ENCODE measurements at regions of chr2 and their contacts with region 1.

Region 1: GRCh38 chr2:55419679-55420438 is at the start of gene CCDC88A:
- DNase-seq: peak; percentile 98
- H3K4me3 ChIP-seq: peak within 1 kb of the TSS; percentile 67 to 94 (median 88)
- H3K27ac ChIP-seq: peak within 1 kb of the TSS; percentile 86 to 93 (median 92)
- H3K4me1 ChIP-seq: peaks cover 5 to 34% (median 23%) of the 10 kb centered on the region in 4 donors
- H3K27me3 ChIP-seq: no peaks in the 10 kb centered on the region
- CTCF ChIP-seq: peak in 2 of 3 experiments; percentile 20 to 52
- EP300 ChIP-seq: no peak
- POLR2A ChIP-seq: peak; percentile 61
- total RNA-seq, gene CCDC88A: 29.7 to 58.6 (median 38.5) TPM

Region 2: DNA sequence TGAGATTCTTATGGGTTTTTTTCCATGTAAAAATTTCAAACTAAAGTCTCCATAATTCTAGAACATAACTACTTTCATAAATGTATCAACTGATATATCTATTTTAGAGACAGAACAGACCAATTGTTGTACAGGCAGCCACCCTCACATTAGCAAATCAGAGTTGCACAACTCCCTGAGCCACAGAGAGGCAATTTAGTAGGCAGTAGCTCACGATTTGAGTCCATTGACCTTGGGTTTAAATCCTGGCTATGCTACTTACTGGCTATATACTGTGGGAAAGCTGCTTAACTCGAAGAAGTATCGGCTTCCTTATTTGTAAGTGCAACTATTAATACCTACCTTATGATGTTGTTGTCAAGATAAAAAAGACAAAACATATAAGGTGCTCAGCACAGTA is 167.0 kb before region 1 on chr2:
- intact Hi-C with region 1: no loop called
- DNase-seq: no peak
- H3K4me3 ChIP-seq: no peak overlapping the region
- H3K27ac ChIP-seq: no peak overlapping the region
- H3K4me1 ChIP-seq: no peaks in the 10 kb centered on the region
- H3K27me3 ChIP-seq: no peaks in the 10 kb centered on the region
- CTCF ChIP-seq: no peak
- EP300 ChIP-seq: no peak
- POLR2A ChIP-seq: no peak

Region 3: DNA sequence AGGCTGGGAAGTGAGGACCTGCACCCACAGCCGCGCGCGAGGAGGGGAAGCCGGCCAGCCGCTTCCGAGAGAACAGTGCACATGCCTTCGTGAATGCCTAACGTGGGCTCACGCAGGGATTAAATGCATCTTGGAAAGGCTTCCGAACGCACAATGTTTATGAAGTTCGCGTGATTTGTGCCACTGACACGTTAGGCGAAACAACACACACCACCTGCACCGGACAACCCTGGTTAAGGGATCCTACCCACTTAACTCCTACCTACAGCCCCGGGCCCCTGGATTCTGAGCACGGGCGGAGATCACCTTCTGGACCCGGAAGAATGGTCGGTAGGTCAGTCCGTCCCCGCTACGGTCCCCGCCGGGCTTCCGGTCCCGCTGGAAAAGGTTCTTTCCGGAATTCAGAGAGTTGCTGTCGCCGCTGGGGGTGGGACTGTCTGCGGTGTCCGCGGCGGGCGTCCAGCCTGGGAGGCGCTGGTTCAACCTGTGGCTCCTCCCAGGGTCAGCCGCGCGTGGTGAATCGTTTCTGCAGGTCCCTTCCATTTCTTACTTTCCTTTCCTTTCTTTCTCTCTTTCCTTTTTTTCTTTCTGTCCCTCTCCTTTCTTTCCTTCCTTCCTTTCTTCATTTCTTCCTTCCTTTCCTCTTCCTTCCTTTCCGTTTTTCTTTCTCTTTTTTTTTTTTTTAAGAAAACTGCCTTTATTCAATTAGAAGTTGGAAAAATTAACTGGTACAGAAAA is 150.8 kb before region 1 on chr2 and contains the start of gene MTIF2:
- intact Hi-C with region 1: loop called (anchors 5 kb)
- DNase-seq: peak; percentile 97
- H3K4me3 ChIP-seq: peak within 1 kb of the TSS; percentile 71 to 83 (median 72)
- H3K27ac ChIP-seq: peak within 1 kb of the TSS; percentile 83 to 90 (median 88)
- H3K4me1 ChIP-seq: peaks cover 13 to 20% (median 18%) of the 10 kb centered on the region in 4 donors
- H3K27me3 ChIP-seq: no peaks in the 10 kb centered on the region
- CTCF ChIP-seq: peak in 2 of 3 experiments; percentile 2 to 26
- EP300 ChIP-seq: no peak
- POLR2A ChIP-seq: no peak
- total RNA-seq, gene MTIF2: 16.1 to 22.6 (median 21.0) TPM

Region 4: GRCh38 chr2:55282110-55282917 is 137.5 kb before region 1 on chr2:
- intact Hi-C with region 1: loop called (anchors 5 kb)
- DNase-seq: peak; percentile 93
- H3K4me3 ChIP-seq: peak overlapping the region; percentile 66 to 87 (median 71)
- H3K27ac ChIP-seq: peak overlapping the region; percentile 87 to 94 (median 88)
- H3K4me1 ChIP-seq: peaks cover 16 to 34% (median 27%) of the 10 kb centered on the region in 4 donors
- H3K27me3 ChIP-seq: peaks cover 0 to 11% (median 0%) of the 10 kb centered on the region in 4 donors
- CTCF ChIP-seq: no peak
- EP300 ChIP-seq: no peak
- POLR2A ChIP-seq: no peak

Region 5: DNA sequence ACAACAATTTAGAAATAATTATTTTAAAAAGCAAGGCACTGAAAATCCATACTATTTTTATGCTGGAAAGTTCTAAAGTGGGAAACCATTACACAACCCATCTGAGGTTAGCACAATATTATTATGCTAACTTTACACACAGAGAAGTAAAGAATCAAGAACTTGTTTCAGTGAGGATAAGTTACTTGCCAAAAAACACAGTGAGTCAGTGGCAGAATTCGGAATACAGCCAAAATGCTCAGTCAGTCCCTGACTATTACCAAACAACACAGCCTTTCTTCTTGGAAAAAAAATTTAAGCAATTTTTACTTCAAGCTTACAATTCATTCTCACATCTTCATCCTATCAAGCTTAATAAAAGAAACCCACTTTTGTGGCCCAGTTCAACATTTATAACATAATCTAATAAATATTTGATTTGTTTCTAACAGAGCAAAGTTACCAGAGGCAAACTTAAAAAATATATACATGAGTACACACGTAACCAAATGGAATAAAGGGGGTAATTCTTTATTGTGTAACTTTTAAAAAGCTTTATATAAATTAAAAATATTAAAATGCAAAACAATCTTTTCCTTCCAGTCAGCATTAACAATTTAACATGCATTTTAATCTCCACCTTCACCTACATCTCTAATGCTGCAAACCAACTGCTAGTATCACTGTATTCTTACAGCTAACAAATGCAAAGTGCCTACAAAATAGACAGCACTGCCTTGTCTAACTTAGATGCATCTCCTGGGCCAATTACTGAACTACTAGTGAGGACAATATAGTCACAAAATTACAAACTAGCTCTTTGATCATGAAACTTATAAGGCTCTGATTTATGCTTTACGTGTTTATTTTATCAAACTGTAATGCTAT is 55.4 kb before region 1 on chr2:
- intact Hi-C with region 1: loop called (anchors 2 kb)
- DNase-seq: no peak
- H3K4me3 ChIP-seq: no peak overlapping the region
- H3K27ac ChIP-seq: peak overlapping the region; percentile 32 to 49 (median 42)
- H3K4me1 ChIP-seq: peaks cover 0 to 43% (median 30%) of the 10 kb centered on the region in 4 donors
- H3K27me3 ChIP-seq: no peaks in the 10 kb centered on the region
- CTCF ChIP-seq: no peak
- EP300 ChIP-seq: no peak
- POLR2A ChIP-seq: no peak

Region 6: GRCh38 chr2:55519938-55520885 is 100.4 kb after region 1 on chr2:
- intact Hi-C with region 1: loop called (anchors 5 kb)
- DNase-seq: peak; percentile 92
- H3K4me3 ChIP-seq: peak overlapping the region; percentile 79 to 91 (median 85)
- H3K27ac ChIP-seq: peak overlapping the region; percentile 83 to 92 (median 88)
- H3K4me1 ChIP-seq: peaks cover 6 to 23% (median 16%) of the 10 kb centered on the region in 4 donors
- H3K27me3 ChIP-seq: no peaks in the 10 kb centered on the region
- CTCF ChIP-seq: no peak
- EP300 ChIP-seq: no peak
- POLR2A ChIP-seq: no peak

Region 7: DNA sequence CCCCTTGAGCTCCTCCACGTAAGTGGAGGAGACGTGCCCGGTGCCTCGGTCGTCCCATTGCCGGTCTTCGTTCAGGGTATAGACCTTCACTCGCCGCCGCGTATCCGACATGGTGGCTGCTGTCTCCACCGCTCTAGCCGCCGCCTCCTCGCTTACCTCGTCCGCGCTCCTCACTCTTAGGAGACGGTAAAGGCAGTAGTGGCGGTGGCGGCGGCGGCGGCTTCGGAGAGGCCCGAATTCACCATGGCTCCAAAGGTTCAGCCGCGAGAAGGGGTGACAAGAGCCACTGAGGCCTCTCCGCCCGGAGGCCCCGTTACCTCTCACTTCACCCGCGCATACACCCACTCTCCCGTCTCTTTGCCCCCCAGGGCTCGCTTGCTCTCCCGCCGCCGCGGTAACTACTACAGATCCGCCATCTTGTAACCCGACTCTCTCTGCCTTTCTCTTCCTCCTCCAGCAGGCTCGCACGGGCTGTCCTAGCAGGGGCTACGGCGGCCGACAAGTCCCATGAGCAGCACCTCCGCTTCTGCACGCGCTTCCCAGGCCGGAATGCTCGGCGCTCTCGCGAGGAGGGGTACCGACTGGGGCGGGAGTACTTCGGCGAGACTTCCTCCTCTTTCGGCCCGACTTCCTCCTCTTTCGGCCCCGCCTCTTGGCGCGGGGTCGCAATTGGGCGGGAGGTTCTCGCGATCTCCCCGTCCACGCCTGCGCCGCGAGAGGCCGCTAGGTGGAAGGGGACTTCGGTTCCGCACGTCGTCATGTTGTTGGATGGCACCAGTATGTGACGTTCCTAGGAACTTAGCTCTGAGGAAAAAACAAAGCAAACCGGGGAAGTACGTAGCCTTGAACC is 197.5 kb after region 1 on chr2 and contains the start of gene PPP4R3B:
- intact Hi-C with region 1: loop called (anchors 10 kb)
- DNase-seq: peak; percentile 99
- H3K4me3 ChIP-seq: peak within 1 kb of the TSS; percentile 81 to 99 (median 84)
- H3K27ac ChIP-seq: peak within 1 kb of the TSS; percentile 90 to 98 (median 95)
- H3K4me1 ChIP-seq: peaks cover 26 to 58% (median 50%) of the 10 kb centered on the region in 4 donors
- H3K27me3 ChIP-seq: no peaks in the 10 kb centered on the region
- CTCF ChIP-seq: peak; percentile 32 to 66 (median 54)
- EP300 ChIP-seq: no peak
- POLR2A ChIP-seq: peak; percentile 78
- total RNA-seq, gene PPP4R3B: 81.8 to 106 (median 90.5) TPM

Region 8: DNA sequence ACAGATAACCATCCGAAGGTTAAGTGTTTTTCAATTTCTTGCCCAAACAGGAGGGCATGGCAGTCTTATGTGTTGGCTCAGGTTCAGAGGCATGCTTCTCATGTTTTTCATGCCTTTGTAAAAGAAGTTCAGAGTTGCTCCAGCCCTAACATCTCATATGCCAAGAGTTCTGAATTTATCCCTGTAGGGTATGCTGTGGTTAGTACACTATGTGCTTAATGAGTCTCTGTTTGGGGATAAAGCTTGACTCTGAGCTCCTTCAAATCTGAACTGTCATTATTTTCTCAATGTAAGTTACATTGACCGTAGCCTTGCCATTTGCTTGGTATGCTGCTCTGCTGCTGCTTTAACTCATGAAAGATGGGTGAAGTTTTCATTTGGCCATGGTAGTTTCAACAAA is 341.7 kb after region 1 on chr2:
- intact Hi-C with region 1: no loop called
- DNase-seq: no peak
- H3K4me3 ChIP-seq: no peak overlapping the region
- H3K27ac ChIP-seq: peak overlapping the region in 1 of 4 donors; percentile 11
- H3K4me1 ChIP-seq: peaks cover 0 to 10% (median 0%) of the 10 kb centered on the region in 4 donors
- H3K27me3 ChIP-seq: no peaks in the 10 kb centered on the region
- CTCF ChIP-seq: no peak
- EP300 ChIP-seq: no peak
- POLR2A ChIP-seq: no peak